Naive thymus-derived CD4-positive, alpha-beta T cell (primary cell): ENCODE measurements at regions of chr18 and their contacts with region 1.

Region 1: DNA sequence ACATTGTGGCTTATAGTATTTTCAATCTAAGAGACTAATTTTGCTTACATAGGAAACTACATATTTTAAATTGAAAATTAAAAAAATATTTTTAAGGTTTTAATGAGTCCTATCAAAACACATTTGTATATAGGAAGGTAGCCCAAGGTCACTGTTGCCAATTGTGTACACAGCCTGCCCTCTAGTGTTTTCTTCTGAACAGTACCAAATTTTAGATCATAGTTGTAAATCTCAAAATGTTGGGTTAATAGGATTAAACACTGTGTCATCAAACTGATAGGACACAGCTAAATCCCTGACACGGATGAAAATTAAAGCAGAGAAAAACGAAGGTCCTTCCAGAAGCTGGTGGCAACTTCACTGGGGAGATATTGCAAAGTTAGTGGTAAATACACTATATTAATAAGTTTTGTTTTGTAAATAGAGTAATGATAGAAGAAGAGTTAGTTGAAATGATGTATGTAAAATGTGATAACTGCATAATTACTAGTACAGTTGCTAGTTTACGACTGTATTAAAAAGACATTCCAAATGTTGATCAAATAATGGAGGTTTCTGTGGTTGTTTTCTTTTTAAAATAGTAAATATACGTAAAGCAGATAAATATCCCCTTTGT is 19.7 kb downstream of the CLUL1 start:
- DNase-seq: peak in 6 of 9 donors; percentile 7 to 41 (median 25)
- ATAC-seq: peak; percentile 65
- H3K4me3 ChIP-seq: no peak overlapping the region
- H3K4me3 Mint-ChIP-seq: no peak overlapping the region
- H3K27ac ChIP-seq: no peak overlapping the region
- H3K27ac Mint-ChIP-seq: no peak overlapping the region
- H3K4me1 ChIP-seq: no peaks in the 10 kb centered on the region
- H3K4me1 Mint-ChIP-seq: no peaks in the 10 kb centered on the region
- H3K27me3 ChIP-seq: no peaks in the 10 kb centered on the region
- H3K27me3 Mint-ChIP-seq: peaks cover 0 to 21% (median 0%) of the 10 kb centered on the region in 5 donors

Region 2: DNA sequence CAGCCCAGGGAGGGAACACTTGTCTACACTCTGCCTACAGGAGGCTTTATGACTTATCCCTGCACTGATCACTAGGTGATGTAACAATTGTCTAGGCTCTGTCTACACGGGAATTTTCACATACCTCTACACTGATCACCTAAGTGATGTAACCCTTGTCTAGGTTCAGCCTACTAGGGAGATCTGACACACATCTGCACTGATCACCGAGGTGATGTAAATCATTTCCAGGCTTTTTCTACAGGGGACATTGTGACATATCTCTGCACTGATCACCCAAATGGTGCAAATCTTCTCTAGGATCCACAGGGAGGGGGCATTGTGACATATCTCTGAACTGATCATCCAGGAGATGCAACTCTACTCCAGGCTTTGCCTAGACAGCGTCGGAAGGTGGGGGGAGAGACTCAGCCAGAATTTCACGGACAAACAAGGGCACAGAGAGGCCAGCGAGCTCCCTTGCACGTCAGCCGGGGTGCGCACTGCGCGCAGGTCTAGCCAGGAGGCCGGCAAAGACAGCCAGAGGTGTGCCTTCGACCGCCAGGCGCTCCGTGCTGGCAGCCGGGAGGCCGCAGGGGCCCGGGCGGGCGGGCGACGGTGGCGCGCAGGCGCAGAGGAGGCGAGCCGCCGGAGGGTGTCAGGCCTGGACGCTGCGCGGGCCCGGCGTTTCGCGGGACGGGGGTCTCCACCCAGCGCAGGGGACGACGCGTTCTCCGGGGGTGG is 505.0 kb before region 1 on chr18:
- CTCF ChIA-PET with region 1: no interaction called
- POLR2A ChIA-PET with region 1: no interaction called
- intact Hi-C with region 1: loop called in 1 of 2 experiments (anchors 5 kb)
- DNase-seq: peak; percentile 60 to 77 (median 75)
- ATAC-seq: no peak
- H3K4me3 ChIP-seq: peak overlapping the region; percentile 36
- H3K4me3 Mint-ChIP-seq: peak overlapping the region; percentile 79 to 91 (median 89)
- H3K27ac ChIP-seq: peak overlapping the region; percentile 82
- H3K27ac Mint-ChIP-seq: peak overlapping the region; percentile 85 to 99 (median 90)
- H3K4me1 ChIP-seq: peaks cover 0 to 5% of the 10 kb centered on the region in 2 donors
- H3K4me1 Mint-ChIP-seq: peaks cover 4 to 14% (median 7%) of the 10 kb centered on the region in 7 donors
- H3K27me3 ChIP-seq: no peaks in the 10 kb centered on the region
- H3K27me3 Mint-ChIP-seq: peaks cover 0 to 3% (median 0%) of the 10 kb centered on the region in 5 donors

Region 3: GRCh38 chr18:499551-500408 is 116.7 kb before region 1 on chr18:
- CTCF ChIA-PET with region 1: no interaction called
- POLR2A ChIA-PET with region 1: no interaction called
- intact Hi-C with region 1: loop called in 1 of 2 experiments (anchors 5 kb)
- DNase-seq: no peak
- ATAC-seq: no peak
- H3K4me3 ChIP-seq: no peak overlapping the region
- H3K4me3 Mint-ChIP-seq: peak overlapping the region in 3 of 10 donors; percentile 21 to 62 (median 39)
- H3K27ac ChIP-seq: no peak overlapping the region
- H3K27ac Mint-ChIP-seq: no peak overlapping the region
- H3K4me1 ChIP-seq: no peaks in the 10 kb centered on the region
- H3K4me1 Mint-ChIP-seq: peaks cover 0 to 18% (median 5%) of the 10 kb centered on the region in 7 donors
- H3K27me3 ChIP-seq: peaks cover 0 to 3% of the 10 kb centered on the region in 2 donors
- H3K27me3 Mint-ChIP-seq: peaks cover 45 to 54% (median 49%) of the 10 kb centered on the region in 5 donors

Region 4: GRCh38 chr18:596288-596881 is 20.1 kb before region 1 on chr18:
- CTCF ChIA-PET with region 1: no interaction called
- POLR2A ChIA-PET with region 1: no interaction called
- intact Hi-C with region 1: loop called (anchors 2 kb)
- DNase-seq: peak in 1 of 9 donors; percentile 52
- ATAC-seq: peak; percentile 75
- H3K4me3 ChIP-seq: no peak overlapping the region
- H3K4me3 Mint-ChIP-seq: peak overlapping the region in 8 of 10 donors; percentile 55 to 64 (median 56)
- H3K27ac ChIP-seq: peak overlapping the region; percentile 33
- H3K27ac Mint-ChIP-seq: peak overlapping the region in 7 of 9 donors; percentile 8 to 83 (median 73)
- H3K4me1 ChIP-seq: peaks cover 4 to 5% of the 10 kb centered on the region in 2 donors
- H3K4me1 Mint-ChIP-seq: peaks cover 0 to 17% (median 12%) of the 10 kb centered on the region in 7 donors
- H3K27me3 ChIP-seq: peaks cover 0 to 5% of the 10 kb centered on the region in 2 donors
- H3K27me3 Mint-ChIP-seq: peaks cover 21 to 48% (median 34%) of the 10 kb centered on the region in 5 donors